ENCODE measurements at regions of chrX and their contacts with region 1.

Region 1: GRCh38 chrX:46796574-46797191 is 37.8 kb upstream of the SLC9A7 start:
- DNase-seq: peak; percentile 45 to 73
- ATAC-seq: peak; percentile 54 to 78 (median 62)
- H3K4me3 ChIP-seq: no peak overlapping the region
- H3K4me3 Mint-ChIP-seq: no peak overlapping the region
- H3K27ac ChIP-seq: no peak overlapping the region
- H3K27ac Mint-ChIP-seq: no peak overlapping the region
- H3K4me1 ChIP-seq: peaks cover 2% of the 10 kb centered on the region
- H3K4me1 Mint-ChIP-seq: peaks cover 0 to 9% of the 10 kb centered on the region in 2 donors
- H3K27me3 ChIP-seq: no peaks in the 10 kb centered on the region
- H3K27me3 Mint-ChIP-seq: no peaks in the 10 kb centered on the region
- CTCF ChIP-seq: peak; percentile 65

Region 2: DNA sequence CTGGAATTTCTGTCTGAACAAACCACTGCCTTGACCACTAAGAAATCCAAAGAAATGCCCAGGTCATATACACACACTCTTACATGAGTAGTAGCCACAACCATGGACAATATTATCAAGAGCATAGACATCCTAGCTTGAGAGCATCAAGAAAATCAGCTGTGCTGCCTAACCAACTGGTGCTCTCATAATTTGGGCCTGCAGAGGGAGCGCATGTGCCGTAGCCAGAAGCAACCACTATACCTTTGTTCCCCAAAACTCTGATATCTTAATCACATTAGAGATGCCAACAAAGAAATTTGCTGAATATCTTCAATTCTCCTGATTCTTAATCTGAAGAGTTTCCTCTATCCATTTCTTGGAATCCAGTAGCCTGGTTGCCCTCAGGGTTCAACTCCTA is 415.1 kb before region 1 on chrX:
- intact Hi-C with region 1: loop called (anchors 10 kb)
- DNase-seq: peak in 1 of 2 donors; percentile 41
- ATAC-seq: peak in 2 of 3 donors; percentile 40 to 48
- H3K4me3 ChIP-seq: no peak overlapping the region
- H3K4me3 Mint-ChIP-seq: no peak overlapping the region
- H3K27ac ChIP-seq: no peak overlapping the region
- H3K27ac Mint-ChIP-seq: no peak overlapping the region
- H3K4me1 ChIP-seq: no peaks in the 10 kb centered on the region
- H3K4me1 Mint-ChIP-seq: no peaks in the 10 kb centered on the region
- H3K27me3 ChIP-seq: no peaks in the 10 kb centered on the region
- H3K27me3 Mint-ChIP-seq: peaks cover 0 to 29% of the 10 kb centered on the region in 2 donors
- CTCF ChIP-seq: no peak

Region 3: DNA sequence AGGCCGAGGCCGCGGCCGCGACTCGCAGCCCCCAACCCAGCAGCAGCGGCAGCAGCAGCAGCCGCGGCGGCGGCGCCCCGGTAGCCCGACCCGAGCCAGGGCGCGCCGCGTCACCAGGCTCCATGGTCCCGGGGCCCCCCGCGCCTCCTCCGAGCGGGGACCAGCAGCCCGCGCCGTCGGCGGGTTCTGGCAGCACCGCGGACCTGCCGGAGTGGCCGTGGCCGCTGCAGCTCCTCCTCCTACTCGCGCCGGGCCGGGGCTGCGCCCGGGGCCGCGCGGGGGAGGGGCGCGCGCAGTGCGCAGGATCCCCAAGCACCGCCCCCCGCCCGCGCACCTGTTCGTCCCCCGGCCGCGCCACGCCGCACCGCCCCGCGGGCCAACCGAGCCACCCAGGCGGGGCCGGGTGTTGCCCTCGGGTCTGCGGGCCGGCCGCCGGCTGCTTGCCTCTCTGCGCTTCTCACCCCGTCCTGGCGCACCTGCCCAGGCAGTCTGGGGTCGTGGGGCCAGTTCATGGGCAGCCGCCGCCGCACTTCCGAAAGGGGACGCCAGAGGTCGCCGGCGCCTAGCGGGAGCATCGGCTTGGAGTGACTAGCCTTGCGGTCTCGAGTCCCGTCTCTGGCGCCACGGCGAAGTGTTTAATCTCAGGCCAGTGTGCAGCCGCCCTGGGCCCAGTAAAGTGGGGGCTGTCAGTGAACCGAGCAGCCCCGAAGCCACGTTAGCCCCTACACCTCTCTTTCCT is 37.6 kb before region 1 on chrX and contains the start of gene SLC9A7:
- intact Hi-C with region 1: loop called (anchors 1 kb)
- DNase-seq: peak; percentile 66 to 81
- ATAC-seq: peak; percentile 87 to 89 (median 89)
- H3K4me3 ChIP-seq: peak within 1 kb of the TSS; percentile 51
- H3K4me3 Mint-ChIP-seq: peak within 1 kb of the TSS; percentile 85
- H3K27ac ChIP-seq: peak within 1 kb of the TSS; percentile 43
- H3K27ac Mint-ChIP-seq: peak within 1 kb of the TSS in 1 of 2 donors; percentile 45
- H3K4me1 ChIP-seq: peaks cover 16% of the 10 kb centered on the region
- H3K4me1 Mint-ChIP-seq: peaks cover 6 to 7% of the 10 kb centered on the region in 2 donors
- H3K27me3 ChIP-seq: no peaks in the 10 kb centered on the region
- H3K27me3 Mint-ChIP-seq: peaks cover 4 to 29% of the 10 kb centered on the region in 2 donors
- CTCF ChIP-seq: peak; percentile 66
- total RNA-seq, gene SLC9A7: 0.39 to 1.1 (median 0.75) TPM

Measured in natural killer cell (primary cell).